MCF 10A (cell line): ENCODE measurements at regions of chr3 and their contacts with region 1.

Region 1: DNA sequence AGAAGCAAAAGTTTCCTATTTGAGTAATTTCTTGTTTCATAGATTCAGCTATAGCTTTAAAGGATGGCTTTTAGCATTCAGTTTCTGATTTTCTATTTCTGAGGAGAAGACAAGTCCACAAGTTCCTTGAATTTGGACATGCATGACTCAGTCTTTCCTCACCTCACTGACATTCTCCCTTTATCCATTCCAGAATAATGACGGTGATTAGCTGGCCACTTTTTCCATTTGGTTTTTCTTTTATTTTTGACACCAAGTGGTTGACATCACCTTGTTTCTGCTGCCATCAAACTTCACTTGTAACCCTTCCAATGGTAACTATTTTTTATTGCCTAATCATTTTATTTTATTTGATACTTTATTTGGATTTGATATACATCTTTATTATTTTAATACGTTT is 404.4 kb upstream of the KCNMB2 start:
- DNase-seq: no peak
- H3K4me3 Mint-ChIP-seq: no peak overlapping the region
- H3K27ac Mint-ChIP-seq: no peak overlapping the region
- H3K4me1 Mint-ChIP-seq: no peaks in the 10 kb centered on the region
- H3K27me3 Mint-ChIP-seq: no peaks in the 10 kb centered on the region
- CTCF ChIP-seq: no peak

Region 2: DNA sequence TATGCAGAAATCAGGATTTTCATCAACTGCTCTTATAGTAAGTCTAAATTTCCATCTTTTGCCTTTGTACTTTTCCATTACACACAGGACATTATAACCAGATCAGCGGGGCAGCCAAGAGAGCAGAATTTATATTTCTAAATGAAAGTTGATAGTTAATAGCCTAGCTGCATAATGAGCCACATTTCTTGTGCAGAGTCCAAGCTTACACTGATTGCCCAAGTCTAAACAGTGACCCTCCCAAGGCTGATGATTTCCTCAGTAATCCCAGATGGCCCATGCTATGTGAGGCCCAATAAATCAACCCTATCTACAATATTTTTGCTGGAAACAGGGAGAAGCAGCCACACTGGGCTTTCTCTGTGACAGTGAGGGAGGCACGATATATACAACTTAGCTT is 71.4 kb before region 1 on chr3:
- CTCF ChIA-PET with region 1: no interaction called
- POLR2A ChIA-PET with region 1: no interaction called
- intact Hi-C with region 1: no loop called
- DNase-seq: no peak
- H3K4me3 Mint-ChIP-seq: no peak overlapping the region
- H3K27ac Mint-ChIP-seq: no peak overlapping the region
- H3K4me1 Mint-ChIP-seq: no peaks in the 10 kb centered on the region
- H3K27me3 Mint-ChIP-seq: no peaks in the 10 kb centered on the region
- CTCF ChIP-seq: no peak

Region 3: GRCh38 chr3:178947738-178948137 is 815.9 kb after region 1 on chr3:
- CTCF ChIA-PET with region 1: no interaction called
- POLR2A ChIA-PET with region 1: no interaction called
- intact Hi-C with region 1: loop called (anchors 10 kb)
- DNase-seq: no peak
- H3K4me3 Mint-ChIP-seq: no peak overlapping the region
- H3K27ac Mint-ChIP-seq: no peak overlapping the region
- H3K4me1 Mint-ChIP-seq: peaks cover 6% of the 10 kb centered on the region
- H3K27me3 Mint-ChIP-seq: no peaks in the 10 kb centered on the region
- CTCF ChIP-seq: peak; percentile 7